Cardiac septum (tissue), 1 donor: ENCODE measurements at regions of chr6 and their contacts with region 1.

Region 1: GRCh38 chr6:8219352-8219943 is 117.1 kb upstream of the EEF1E1 start:
- DNase-seq: no peak

Region 2: GRCh38 chr6:8132130-8132529 is 87.3 kb before region 1 on chr6:
- intact Hi-C with region 1: loop called (anchors 2 kb)
- DNase-seq: no peak